Activated CD4-positive, alpha-beta T cell treated with anti-CD3 and anti-CD28 coated beads, Interleukin-2, amount 10 ng/mL, durations not matched to agents 24 days and 14 days (primary cell): ENCODE measurements at regions of chr3 and their contacts with region 1.

Region 1: DNA sequence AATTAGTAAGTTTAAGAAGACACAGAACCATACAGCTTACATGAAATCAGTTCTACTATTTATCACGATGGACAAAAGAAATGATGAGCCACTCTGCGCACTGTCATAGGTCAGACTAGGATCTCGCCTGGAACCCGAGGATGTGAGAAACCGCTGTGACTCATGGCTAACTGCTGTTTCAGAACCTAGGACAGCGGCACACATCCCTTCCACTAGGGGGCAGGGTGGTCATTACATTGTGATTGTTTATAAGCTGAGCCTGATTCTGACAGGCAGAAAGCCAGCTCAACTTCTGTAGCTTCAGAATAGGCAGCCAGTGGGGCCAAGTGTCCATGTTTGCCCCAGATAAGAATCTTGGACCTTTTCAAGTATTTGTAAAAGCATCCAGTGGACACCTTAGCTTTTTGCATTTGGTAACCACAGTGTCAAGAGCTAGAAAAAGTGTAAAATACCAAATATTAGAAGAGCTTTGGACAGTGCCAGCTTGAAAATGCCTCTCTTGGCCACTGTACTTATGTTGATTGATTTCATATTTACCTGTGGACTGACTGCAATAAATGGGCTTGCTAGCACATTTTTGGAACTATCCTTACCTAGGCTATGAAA is 115.8 kb downstream of the KBTBD8 start:
- DNase-seq: peak; percentile 93
- H3K4me3 Mint-ChIP-seq: no peak overlapping the region
- H3K27ac Mint-ChIP-seq: no peak overlapping the region
- H3K4me1 Mint-ChIP-seq: no peaks in the 10 kb centered on the region
- H3K27me3 Mint-ChIP-seq: peaks cover 3% of the 10 kb centered on the region

Region 2: DNA sequence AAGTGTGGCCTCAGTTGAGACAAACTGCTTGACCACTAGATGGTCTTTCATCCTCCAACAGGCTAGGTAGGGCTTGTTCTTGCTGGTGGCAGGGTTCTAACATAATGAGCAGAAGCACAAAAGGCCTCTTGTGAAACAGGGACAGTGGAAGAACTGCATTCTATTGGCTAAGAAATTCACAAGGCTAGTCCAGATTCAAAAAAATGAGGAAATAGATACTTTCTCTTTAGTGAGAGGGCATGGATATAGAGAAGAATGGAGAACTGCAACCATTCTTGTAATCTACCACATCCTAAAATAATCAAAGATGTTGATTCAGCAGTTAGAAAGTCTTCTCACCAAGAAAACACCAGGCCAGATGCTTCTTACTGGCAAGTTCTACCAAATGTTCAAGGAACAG is 469.4 kb before region 1 on chr3:
- intact Hi-C with region 1: no loop called
- DNase-seq: no peak
- H3K4me3 Mint-ChIP-seq: no peak overlapping the region
- H3K27ac Mint-ChIP-seq: no peak overlapping the region
- H3K4me1 Mint-ChIP-seq: no peaks in the 10 kb centered on the region
- H3K27me3 Mint-ChIP-seq: peaks cover 4% of the 10 kb centered on the region

Region 3: GRCh38 chr3:66971891-66972551 is 141.9 kb before region 1 on chr3:
- intact Hi-C with region 1: loop called (anchors 1 kb)
- DNase-seq: peak; percentile 89
- H3K4me3 Mint-ChIP-seq: peak overlapping the region; percentile 78
- H3K27ac Mint-ChIP-seq: peak overlapping the region; percentile 66
- H3K4me1 Mint-ChIP-seq: peaks cover 13% of the 10 kb centered on the region
- H3K27me3 Mint-ChIP-seq: peaks cover 11% of the 10 kb centered on the region

Region 4: GRCh38 chr3:67312155-67312554 is 198.2 kb after region 1 on chr3:
- intact Hi-C with region 1: no loop called
- DNase-seq: no peak
- H3K4me3 Mint-ChIP-seq: no peak overlapping the region
- H3K27ac Mint-ChIP-seq: no peak overlapping the region
- H3K4me1 Mint-ChIP-seq: no peaks in the 10 kb centered on the region
- H3K27me3 Mint-ChIP-seq: no peaks in the 10 kb centered on the region

Region 5: DNA sequence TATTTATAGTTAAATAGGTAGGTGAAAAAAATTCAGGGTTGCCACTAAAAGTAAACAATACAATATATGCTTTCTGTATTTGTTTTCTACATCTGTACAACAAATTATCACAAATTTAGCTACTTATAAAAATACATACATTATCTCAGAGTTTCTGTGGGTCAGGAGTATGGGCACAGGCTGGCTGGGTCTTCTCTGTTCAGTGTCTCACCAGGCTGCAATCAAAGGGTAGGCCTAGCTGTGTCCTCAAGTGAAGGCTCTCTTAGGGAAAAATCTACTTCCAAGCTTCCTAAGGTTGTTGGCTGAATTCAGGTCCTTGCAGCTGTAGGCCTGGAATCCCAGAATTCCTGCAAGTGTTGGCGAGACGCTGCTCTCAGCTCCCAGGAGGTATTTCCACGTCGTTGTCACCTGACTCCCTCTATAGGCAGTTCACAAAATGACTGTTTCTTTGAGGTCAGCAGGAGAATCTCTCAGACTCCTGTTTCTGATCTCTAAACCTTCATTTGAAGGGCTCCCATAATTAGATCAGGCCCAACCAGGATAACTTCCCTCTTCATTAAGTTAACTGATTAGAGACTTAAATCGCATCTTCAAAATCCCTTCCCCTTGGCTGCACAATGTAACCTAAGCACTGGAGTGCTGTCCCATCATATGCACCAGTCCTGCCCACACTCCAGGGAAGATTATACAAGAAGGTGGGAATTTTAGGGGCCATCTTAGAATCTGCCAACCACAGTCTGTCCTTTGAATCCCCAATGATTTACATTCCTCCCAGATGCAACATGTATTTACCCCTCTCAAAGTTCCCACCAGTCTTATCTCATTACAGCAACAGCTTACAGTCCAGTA is 243.9 kb after region 1 on chr3:
- intact Hi-C with region 1: loop called (anchors 5 kb)
- DNase-seq: no peak
- H3K4me3 Mint-ChIP-seq: no peak overlapping the region
- H3K27ac Mint-ChIP-seq: no peak overlapping the region
- H3K4me1 Mint-ChIP-seq: peaks cover 24% of the 10 kb centered on the region
- H3K27me3 Mint-ChIP-seq: no peaks in the 10 kb centered on the region

Region 6: GRCh38 chr3:67790043-67790442 is 676.1 kb after region 1 on chr3:
- intact Hi-C with region 1: loop called (anchors 1 kb)
- DNase-seq: peak; percentile 86
- H3K4me3 Mint-ChIP-seq: no peak overlapping the region
- H3K27ac Mint-ChIP-seq: no peak overlapping the region
- H3K4me1 Mint-ChIP-seq: peaks cover 2% of the 10 kb centered on the region
- H3K27me3 Mint-ChIP-seq: peaks cover 3% of the 10 kb centered on the region

Region 7: DNA sequence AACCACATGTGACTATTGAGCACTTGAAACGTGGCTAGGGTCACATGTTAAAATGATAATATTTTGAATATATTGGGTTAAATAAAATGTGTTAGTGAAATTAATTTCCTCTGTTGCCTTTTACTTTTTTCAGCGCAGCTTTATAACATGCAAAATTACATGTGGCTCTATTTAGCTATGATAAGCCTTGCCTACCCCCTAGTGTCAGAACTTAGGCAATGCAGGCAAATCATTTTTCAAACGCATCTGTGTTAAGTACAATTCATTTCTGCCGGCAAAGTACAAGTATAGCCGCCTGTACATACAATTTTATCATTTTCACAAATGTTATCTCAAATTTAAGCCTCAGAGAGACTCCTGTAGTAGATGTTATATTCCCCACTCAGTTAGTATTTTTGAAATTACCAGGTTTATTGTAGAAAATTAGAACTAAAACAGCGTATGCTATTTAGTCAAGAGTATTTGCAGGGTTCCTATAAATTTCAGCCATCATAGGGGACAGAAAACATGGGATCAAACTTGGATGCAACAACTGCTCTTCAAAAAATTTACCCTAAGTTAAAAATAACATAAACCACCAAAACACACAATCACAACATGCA is 1762.3 kb after region 1 on chr3:
- intact Hi-C with region 1: loop called (anchors 2 kb)
- DNase-seq: peak; percentile 79
- H3K4me3 Mint-ChIP-seq: no peak overlapping the region
- H3K27ac Mint-ChIP-seq: no peak overlapping the region
- H3K4me1 Mint-ChIP-seq: no peaks in the 10 kb centered on the region
- H3K27me3 Mint-ChIP-seq: peaks cover 7% of the 10 kb centered on the region

Region 8: DNA sequence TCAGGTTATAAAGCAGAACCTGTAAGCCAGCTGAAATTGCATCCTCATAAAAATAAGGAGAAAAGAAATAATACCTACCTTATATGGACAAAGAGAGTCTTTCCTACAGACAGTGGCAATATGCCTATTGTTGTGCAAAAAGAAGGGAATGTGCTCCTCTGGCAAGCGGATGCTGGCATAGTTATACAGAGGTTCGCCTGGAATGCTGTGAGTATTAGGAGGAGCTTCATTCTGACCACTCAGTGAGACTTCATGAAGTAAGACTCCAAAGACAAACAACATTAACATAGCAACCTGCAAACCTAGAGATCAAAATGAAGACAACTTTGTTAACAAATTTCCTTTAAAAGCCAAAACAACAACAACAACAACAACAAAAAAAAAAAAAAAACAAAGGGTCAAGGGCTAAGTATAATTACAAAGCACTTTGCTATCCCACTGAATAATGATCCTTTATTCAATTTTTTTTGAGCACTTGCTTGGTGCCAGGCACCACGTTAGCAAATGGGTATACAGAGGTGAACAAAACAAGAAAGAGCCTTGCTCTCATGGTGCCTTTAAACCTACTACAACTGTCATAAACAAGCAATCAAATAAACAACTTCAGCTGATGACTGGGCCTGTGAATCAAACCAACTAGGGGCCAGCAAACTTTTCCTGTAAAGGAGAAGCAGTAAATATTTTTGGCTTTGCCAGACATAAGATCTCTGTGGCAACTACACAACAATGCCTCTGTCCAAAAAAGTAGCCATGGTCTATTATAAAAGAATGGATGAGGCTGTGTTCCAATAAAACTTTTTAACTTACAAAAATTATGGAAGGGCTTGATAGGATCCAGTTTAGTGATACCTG is 1895.9 kb after region 1 on chr3:
- intact Hi-C with region 1: no loop called
- DNase-seq: no peak
- H3K4me3 Mint-ChIP-seq: no peak overlapping the region
- H3K27ac Mint-ChIP-seq: no peak overlapping the region
- H3K4me1 Mint-ChIP-seq: peaks cover 8% of the 10 kb centered on the region
- H3K27me3 Mint-ChIP-seq: no peaks in the 10 kb centered on the region